H1 (cell line): ENCODE measurements at regions of chr1 and their contacts with region 1.

Region 1: DNA sequence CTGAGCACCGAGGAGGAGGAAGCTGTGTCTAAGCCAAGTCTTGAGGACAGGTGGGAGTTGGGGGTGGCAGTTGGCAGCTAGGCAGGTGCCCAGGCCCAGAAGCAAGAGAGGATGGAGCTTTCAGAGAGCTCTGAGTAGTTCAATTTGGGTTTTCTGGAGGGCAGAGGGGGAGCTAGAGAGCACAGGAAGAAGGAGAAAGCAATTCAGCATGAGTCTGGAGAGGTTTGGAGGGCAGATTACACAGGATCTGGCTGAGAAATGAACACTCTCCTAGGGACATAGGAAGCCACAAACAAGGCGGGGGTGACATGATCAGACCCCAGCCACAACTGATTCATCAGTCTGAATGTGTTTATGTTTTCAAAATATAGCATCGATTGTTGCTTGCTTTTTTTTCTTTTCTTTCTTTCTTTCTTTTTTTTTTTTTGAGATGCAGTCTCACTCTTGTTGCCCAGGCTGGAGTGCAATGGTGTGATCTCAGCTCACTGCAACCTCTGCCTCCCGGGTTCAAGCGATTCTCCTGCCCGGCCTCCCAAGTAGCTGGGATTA is 23.8 kb downstream of the PTPRF start:
- DNase-seq: no peak
- H3K4me3 ChIP-seq: no peak overlapping the region
- H3K27ac ChIP-seq: no peak overlapping the region
- H3K4me1 ChIP-seq: peaks cover 14 to 39% (median 31%) of the 10 kb centered on the region in 4 experiments
- H3K27me3 ChIP-seq: no peaks in the 10 kb centered on the region; a peak in 1 of 7 replicates
- CTCF ChIP-seq: peak in 2 of 3 experiments; percentile 55 to 74; a peak in 3 of 4 replicates
- EP300 ChIP-seq: no peak
- POLR2A ChIP-seq: no peak
- RAD21 ChIP-seq: peak; percentile 43 to 57; a peak in 3 of 4 replicates

Region 2: DNA sequence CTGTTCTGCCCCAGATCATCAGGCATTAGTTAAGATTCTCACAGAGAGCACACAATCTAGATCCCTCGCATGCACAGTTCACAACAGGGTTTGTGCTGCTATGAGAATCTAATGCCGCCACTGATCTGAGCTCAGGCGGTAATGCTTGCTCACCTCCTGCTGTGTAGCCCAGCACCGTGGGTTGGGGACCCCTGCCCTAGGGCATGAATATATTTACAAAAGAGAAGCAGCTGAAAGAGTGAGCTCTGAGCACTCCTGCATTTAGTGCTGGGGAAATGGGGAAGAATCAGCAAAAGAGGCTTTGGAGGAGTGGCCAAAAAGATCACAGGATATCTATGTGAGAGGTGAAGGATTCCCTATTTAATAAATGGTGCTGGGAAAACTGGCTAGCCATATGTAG is 376.8 kb before region 1 on chr1:
- CTCF ChIA-PET with region 1: no interaction called
- POLR2A ChIA-PET with region 1: no interaction called
- DNase-seq: no peak
- H3K4me3 ChIP-seq: no peak overlapping the region
- H3K27ac ChIP-seq: no peak overlapping the region
- H3K4me1 ChIP-seq: peaks cover 1 to 10% (median 9%) of the 10 kb centered on the region in 4 experiments; a peak in 6 of 7 replicates
- H3K27me3 ChIP-seq: peaks cover 0 to 2% (median 0%) of the 10 kb centered on the region in 4 experiments; a peak in 2 of 7 replicates
- CTCF ChIP-seq: no peak
- EP300 ChIP-seq: no peak
- POLR2A ChIP-seq: no peak
- RAD21 ChIP-seq: no peak

Region 3: GRCh38 chr1:43529206-43529731 is 25.2 kb before region 1 on chr1:
- CTCF ChIA-PET with region 1: interaction called, 169 read pairs
- POLR2A ChIA-PET with region 1: interaction called, 270 read pairs
- DNase-seq: peak in 1 of 2 experiments; percentile 90
- H3K4me3 ChIP-seq: peak overlapping the region in 1 of 4 experiments; percentile 45; a peak in 1 of 8 replicates
- H3K27ac ChIP-seq: no peak overlapping the region
- H3K4me1 ChIP-seq: peaks cover 15 to 21% (median 18%) of the 10 kb centered on the region in 4 experiments
- H3K27me3 ChIP-seq: peaks cover 0 to 8% (median 6%) of the 10 kb centered on the region in 4 experiments; a peak in 5 of 7 replicates
- CTCF ChIP-seq: peak; percentile 84 to 98 (median 90)
- EP300 ChIP-seq: no peak
- POLR2A ChIP-seq: no peak
- RAD21 ChIP-seq: peak; percentile 97 to 98

Region 4: DNA sequence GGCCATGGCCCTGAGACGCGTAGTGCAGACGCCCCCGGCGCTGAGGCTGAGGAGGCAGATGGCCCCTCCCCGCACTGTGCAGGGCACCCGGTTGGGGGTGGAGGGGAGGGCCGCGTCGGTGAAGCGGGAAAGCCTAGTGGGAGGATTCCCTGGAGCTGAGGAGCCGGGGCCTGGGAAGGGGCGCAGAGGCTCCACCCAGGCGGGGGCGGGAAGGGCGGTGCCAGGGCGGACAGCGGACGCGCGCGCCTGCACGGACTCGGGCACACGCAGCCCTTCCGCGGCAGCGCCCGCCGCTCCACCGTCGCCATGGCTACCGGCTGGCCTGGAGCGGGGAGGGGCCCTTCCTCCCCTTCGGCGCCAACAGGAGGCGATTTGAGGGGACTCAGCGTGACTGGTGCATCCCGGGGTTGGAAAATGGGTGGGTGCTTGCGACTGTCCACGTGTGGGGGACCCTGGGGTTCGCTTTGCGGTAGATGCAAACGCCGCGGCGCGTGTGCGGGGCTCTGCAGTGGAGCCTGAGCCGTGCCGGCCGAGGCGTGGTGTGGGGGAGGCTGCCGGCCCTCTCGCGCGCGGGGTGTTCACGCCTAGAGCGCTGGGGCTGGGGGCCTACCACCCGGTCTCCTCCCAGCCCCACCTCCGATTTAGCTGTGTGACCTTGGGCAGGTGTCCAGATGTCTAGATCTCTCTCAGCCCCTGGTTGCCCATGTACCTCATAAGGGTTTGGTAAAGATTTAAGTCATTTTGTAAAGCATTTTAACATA is 11.3 kb after region 1 on chr1:
- CTCF ChIA-PET with region 1: interaction called, 68 read pairs
- POLR2A ChIA-PET with region 1: interaction called, 15 read pairs
- DNase-seq: peak in 1 of 2 experiments; percentile 88
- H3K4me3 ChIP-seq: peak overlapping the region in 3 of 4 experiments; percentile 18 to 50 (median 32); a peak in 6 of 8 replicates
- H3K27ac ChIP-seq: no peak overlapping the region; the same call in 1 of the 2 replicates
- H3K4me1 ChIP-seq: peaks cover 0 to 25% (median 20%) of the 10 kb centered on the region in 4 experiments; a peak in 6 of 7 replicates
- H3K27me3 ChIP-seq: no peaks in the 10 kb centered on the region
- CTCF ChIP-seq: no peak
- EP300 ChIP-seq: no peak
- POLR2A ChIP-seq: no peak
- RAD21 ChIP-seq: no peak

Region 5: DNA sequence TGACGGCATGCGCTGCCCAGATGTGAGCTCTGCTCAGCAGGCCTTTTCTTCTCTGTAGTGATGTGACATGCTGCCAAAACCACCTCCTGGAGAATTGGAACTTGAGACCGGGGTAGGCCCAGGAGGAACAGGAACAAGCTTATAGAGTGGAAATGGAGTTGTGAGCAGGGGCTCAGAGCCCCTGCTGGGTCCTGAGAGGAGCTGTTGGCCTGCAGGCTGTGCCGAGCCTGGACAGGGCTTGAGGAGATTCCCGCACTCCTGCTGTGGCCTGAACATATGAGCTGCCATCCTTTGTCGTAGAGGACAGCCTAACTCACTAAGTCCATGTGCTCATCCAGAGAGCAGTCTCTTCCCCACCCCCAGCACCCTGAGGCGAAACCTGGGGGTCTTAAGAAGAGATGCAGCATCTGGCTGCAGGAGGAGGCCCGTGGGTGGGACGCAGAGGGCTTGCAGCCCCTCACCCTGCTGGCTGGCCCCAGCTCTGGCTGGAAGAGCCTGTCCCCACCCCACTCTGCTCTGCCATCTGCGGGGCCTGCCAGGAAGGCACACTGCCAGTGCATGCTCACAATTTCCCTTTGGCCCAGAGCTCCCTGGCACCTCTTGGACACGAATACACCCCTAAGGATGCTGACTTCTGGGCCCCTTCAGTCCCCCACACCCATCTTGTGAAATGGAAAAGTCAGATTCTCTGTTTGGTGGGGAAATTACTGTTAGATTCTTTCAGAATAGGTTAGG is 18.7 kb after region 1 on chr1:
- CTCF ChIA-PET with region 1: interaction called, 68 read pairs
- POLR2A ChIA-PET with region 1: interaction called, 15 read pairs
- DNase-seq: no peak
- H3K4me3 ChIP-seq: no peak overlapping the region
- H3K27ac ChIP-seq: no peak overlapping the region
- H3K4me1 ChIP-seq: peaks cover 0 to 11% (median 1%) of the 10 kb centered on the region in 4 experiments; a peak in 3 of 7 replicates
- H3K27me3 ChIP-seq: no peaks in the 10 kb centered on the region
- CTCF ChIP-seq: no peak
- EP300 ChIP-seq: no peak
- POLR2A ChIP-seq: no peak
- RAD21 ChIP-seq: no peak

Region 6: GRCh38 chr1:43582162-43582589 is 27.7 kb after region 1 on chr1:
- CTCF ChIA-PET with region 1: interaction called, 12 read pairs
- POLR2A ChIA-PET with region 1: interaction called, 5 read pairs
- DNase-seq: no peak
- H3K4me3 ChIP-seq: no peak overlapping the region
- H3K27ac ChIP-seq: no peak overlapping the region
- H3K4me1 ChIP-seq: no peaks in the 10 kb centered on the region; a peak in 1 of 7 replicates
- H3K27me3 ChIP-seq: no peaks in the 10 kb centered on the region
- CTCF ChIP-seq: no peak
- EP300 ChIP-seq: no peak
- POLR2A ChIP-seq: no peak
- RAD21 ChIP-seq: no peak